ENCODE measurements at regions of chr2 and their contacts with region 1.

Region 1: DNA sequence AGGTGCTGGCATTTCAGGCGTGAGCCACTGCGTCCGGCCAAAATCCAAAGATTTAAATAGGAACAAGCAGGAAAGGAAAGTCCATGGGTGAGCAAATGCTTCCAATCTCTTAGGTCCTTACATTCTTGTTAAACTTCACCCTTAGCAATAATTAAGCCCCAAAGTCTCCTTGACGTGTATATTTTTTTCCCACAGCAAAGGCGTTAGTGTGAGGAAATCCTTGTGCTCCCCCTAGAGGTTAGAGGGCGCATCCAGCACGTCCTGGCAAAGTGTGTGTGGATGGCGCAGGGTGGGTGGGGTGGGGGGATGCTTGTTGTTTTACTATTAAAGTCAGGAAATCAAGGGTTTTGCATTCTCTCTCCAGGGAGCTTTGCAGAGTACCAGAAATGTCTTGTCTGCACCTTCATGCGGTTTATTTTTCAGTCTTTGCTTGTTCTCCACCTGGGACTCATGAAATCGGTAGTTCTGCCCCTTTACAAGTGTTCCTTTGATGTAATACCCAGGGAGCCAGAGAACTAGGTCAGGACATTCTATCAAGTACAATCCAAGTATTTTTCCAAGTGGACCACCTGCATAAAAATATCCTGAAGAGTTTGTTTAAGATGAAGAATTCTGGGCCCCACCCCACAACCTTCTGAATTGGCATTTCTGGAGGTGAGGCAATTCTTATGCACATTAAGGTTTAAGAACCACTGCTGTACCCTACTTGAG is 22.2 kb upstream of the ITSN2 start:
- DNase-seq: peak; percentile 54
- H3K4me3 ChIP-seq: no peak overlapping the region
- H3K27ac ChIP-seq: no peak overlapping the region
- H3K4me1 ChIP-seq: peaks cover 0 to 7% (median 3%) of the 10 kb centered on the region in 4 donors
- H3K27me3 ChIP-seq: no peaks in the 10 kb centered on the region
- CTCF ChIP-seq: peak; percentile 33 to 83 (median 81)
- EP300 ChIP-seq: no peak
- POLR2A ChIP-seq: no peak

Region 2: DNA sequence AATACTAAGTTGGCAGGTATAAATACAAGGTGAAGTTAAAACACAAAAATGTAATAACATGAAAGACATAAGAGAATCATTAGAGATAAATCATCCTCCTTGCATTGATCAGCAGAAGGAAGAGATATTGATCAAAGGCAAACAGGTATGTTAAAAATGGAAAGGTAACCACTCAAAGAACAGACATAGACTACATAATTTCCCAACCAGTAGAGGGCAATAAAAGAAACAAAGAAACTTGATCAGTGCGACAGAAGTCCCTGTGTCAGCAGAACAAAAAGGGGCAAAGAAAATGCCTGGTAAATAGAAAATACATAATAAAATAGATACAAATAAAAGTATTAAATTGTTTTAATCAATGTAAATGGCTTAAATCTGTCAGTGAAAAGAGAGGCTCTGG is 154.0 kb before region 1 on chr2:
- in situ Hi-C with region 1: loop called in 1 of 4 experiments (anchors 25 kb)
- intact Hi-C with region 1: no loop called
- DNase-seq: no peak
- H3K4me3 ChIP-seq: no peak overlapping the region
- H3K27ac ChIP-seq: no peak overlapping the region
- H3K4me1 ChIP-seq: no peaks in the 10 kb centered on the region
- H3K27me3 ChIP-seq: no peaks in the 10 kb centered on the region
- CTCF ChIP-seq: peak in 3 of 5 experiments; percentile 9 to 20 (median 18)
- EP300 ChIP-seq: no peak
- POLR2A ChIP-seq: no peak

Region 3: GRCh38 chr2:24269265-24269664 is 113.3 kb before region 1 on chr2:
- in situ Hi-C with region 1: loop called in 1 of 4 experiments (anchors 25 kb)
- intact Hi-C with region 1: no loop called
- DNase-seq: no peak
- H3K4me3 ChIP-seq: no peak overlapping the region
- H3K27ac ChIP-seq: no peak overlapping the region
- H3K4me1 ChIP-seq: no peaks in the 10 kb centered on the region
- H3K27me3 ChIP-seq: no peaks in the 10 kb centered on the region
- CTCF ChIP-seq: no peak
- EP300 ChIP-seq: no peak
- POLR2A ChIP-seq: no peak

Region 4: GRCh38 chr2:25056098-25056821 is 673.7 kb after region 1 on chr2:
- in situ Hi-C with region 1: no loop called
- intact Hi-C with region 1: no loop called
- DNase-seq: no peak
- H3K4me3 ChIP-seq: no peak overlapping the region
- H3K27ac ChIP-seq: no peak overlapping the region
- H3K4me1 ChIP-seq: no peaks in the 10 kb centered on the region
- H3K27me3 ChIP-seq: no peaks in the 10 kb centered on the region
- CTCF ChIP-seq: no peak
- EP300 ChIP-seq: no peak
- POLR2A ChIP-seq: no peak